Activated CD4-positive, alpha-beta T cell treated with anti-CD3 and anti-CD28 coated beads, Interleukin-2, amount 10 ng/mL, durations not matched to agents 24 days and 14 days (primary cell): ENCODE measurements at regions of chr16 and their contacts with region 1.

Region 1: GRCh38 chr16:81006814-81007696 is at the starts of genes CENPN and CMC2:
- DNase-seq: peak; percentile 99
- H3K4me3 Mint-ChIP-seq: peak within 1 kb of the TSS; percentile 98
- H3K27ac Mint-ChIP-seq: peak within 1 kb of the TSS; percentile 100
- H3K4me1 Mint-ChIP-seq: peaks cover 53% of the 10 kb centered on the region
- H3K27me3 Mint-ChIP-seq: no peaks in the 10 kb centered on the region
- total RNA-seq, gene CENPN: 61.8 and 63.3 TPM in 2 replicates
- total RNA-seq, gene CMC2: 130 and 137 TPM in 2 replicates

Region 2: GRCh38 chr16:80627108-80627507 is 379.9 kb before region 1 on chr16:
- intact Hi-C with region 1: no loop called
- DNase-seq: no peak
- H3K4me3 Mint-ChIP-seq: no peak overlapping the region
- H3K27ac Mint-ChIP-seq: no peak overlapping the region
- H3K4me1 Mint-ChIP-seq: peaks cover 2% of the 10 kb centered on the region
- H3K27me3 Mint-ChIP-seq: no peaks in the 10 kb centered on the region

Region 3: GRCh38 chr16:81035398-81035974 is 28.4 kb after region 1 on chr16 and contains the start of gene ATMIN:
- intact Hi-C with region 1: loop called (anchors 1 kb)
- DNase-seq: peak; percentile 97
- H3K4me3 Mint-ChIP-seq: peak within 1 kb of the TSS; percentile 88
- H3K27ac Mint-ChIP-seq: peak within 1 kb of the TSS; percentile 69
- H3K4me1 Mint-ChIP-seq: peaks cover 20% of the 10 kb centered on the region
- H3K27me3 Mint-ChIP-seq: no peaks in the 10 kb centered on the region
- total RNA-seq, gene ATMIN: 31.1 and 33.5 TPM in 2 replicates

Region 4: DNA sequence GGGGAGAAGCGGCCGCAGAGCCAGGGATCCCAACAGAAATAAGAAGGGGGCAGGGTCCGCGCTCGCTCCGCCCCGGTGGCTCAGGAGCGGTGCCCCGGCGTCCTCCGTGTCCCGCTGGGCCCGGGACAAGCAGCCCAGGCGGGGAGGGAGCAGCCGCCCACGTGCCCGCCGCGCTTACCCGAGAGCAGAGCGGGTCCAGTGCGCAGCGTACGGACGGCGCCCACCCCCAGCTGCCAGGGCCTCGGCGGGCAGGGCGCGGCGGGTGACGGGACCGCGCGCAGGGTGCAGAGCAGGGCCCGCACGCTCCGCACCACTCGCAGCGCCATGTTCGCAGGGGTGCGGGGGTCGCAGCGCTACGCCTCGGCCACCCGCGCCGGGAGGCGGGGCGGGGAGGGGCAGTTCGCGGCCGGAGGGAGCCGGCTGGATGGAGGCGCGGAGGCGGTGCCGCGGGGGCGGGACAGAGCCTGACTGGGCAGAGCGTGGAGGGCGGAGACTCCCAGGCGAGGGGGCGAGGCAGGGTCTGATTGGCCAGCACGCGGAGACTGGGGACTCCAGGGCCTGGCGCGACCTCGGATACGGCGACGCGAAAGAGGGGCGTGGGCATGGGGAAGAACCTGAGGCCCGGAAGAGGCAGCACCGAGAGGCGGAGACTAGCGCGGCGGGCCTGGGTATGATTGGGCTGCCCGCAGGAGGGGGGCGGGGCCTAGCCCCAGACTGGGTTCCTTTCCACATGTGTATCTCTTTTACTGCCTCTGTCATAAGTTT is 89.1 kb after region 1 on chr16 and contains the start of gene GCSH:
- intact Hi-C with region 1: loop called (anchors 1 kb)
- DNase-seq: peak; percentile 100
- H3K4me3 Mint-ChIP-seq: peak within 1 kb of the TSS; percentile 85
- H3K27ac Mint-ChIP-seq: peak within 1 kb of the TSS; percentile 38
- H3K4me1 Mint-ChIP-seq: peaks cover 5% of the 10 kb centered on the region
- H3K27me3 Mint-ChIP-seq: no peaks in the 10 kb centered on the region
- total RNA-seq, gene GCSH: 20.8 and 22.9 TPM in 2 replicates

Region 5: GRCh38 chr16:81106811-81107503 is 99.9 kb after region 1 on chr16:
- intact Hi-C with region 1: no loop called
- DNase-seq: no peak
- H3K4me3 Mint-ChIP-seq: no peak overlapping the region
- H3K27ac Mint-ChIP-seq: no peak overlapping the region
- H3K4me1 Mint-ChIP-seq: no peaks in the 10 kb centered on the region
- H3K27me3 Mint-ChIP-seq: peaks cover 3% of the 10 kb centered on the region

Region 6: GRCh38 chr16:81251871-81252270 is 244.8 kb after region 1 on chr16:
- intact Hi-C with region 1: no loop called
- DNase-seq: no peak
- H3K4me3 Mint-ChIP-seq: no peak overlapping the region
- H3K27ac Mint-ChIP-seq: no peak overlapping the region
- H3K4me1 Mint-ChIP-seq: no peaks in the 10 kb centered on the region
- H3K27me3 Mint-ChIP-seq: peaks cover 2% of the 10 kb centered on the region

Region 7: GRCh38 chr16:81632392-81633146 is 625.5 kb after region 1 on chr16:
- intact Hi-C with region 1: loop called (anchors 2 kb)
- DNase-seq: peak; percentile 93
- H3K4me3 Mint-ChIP-seq: peak overlapping the region; percentile 82
- H3K27ac Mint-ChIP-seq: peak overlapping the region; percentile 100
- H3K4me1 Mint-ChIP-seq: peaks cover 65% of the 10 kb centered on the region
- H3K27me3 Mint-ChIP-seq: no peaks in the 10 kb centered on the region